ENCODE measurements at regions of chr5 and their contacts with region 1.

Region 1: GRCh38 chr5:134738133-134738962 is at the start of gene CAMLG:
- DNase-seq: peak; percentile 93 to 96 (median 96)
- ATAC-seq: peak; percentile 98
- H3K4me3 ChIP-seq: peak within 1 kb of the TSS; percentile 91
- H3K4me3 Mint-ChIP-seq: peak within 1 kb of the TSS; percentile 88 to 100 (median 96)
- H3K27ac ChIP-seq: peak within 1 kb of the TSS; percentile 93
- H3K27ac Mint-ChIP-seq: peak within 1 kb of the TSS; percentile 90 to 98 (median 93)
- H3K4me1 ChIP-seq: peaks cover 8 to 10% of the 10 kb centered on the region in 2 donors
- H3K4me1 Mint-ChIP-seq: peaks cover 9 to 34% (median 29%) of the 10 kb centered on the region in 7 donors
- H3K27me3 ChIP-seq: no peaks in the 10 kb centered on the region
- H3K27me3 Mint-ChIP-seq: no peaks in the 10 kb centered on the region
- total RNA-seq, gene CAMLG: 20.4 to 38.1 (median 31.8) TPM

Region 2: GRCh38 chr5:132736853-132737833 is 2001.2 kb before region 1 on chr5 and contains the start of gene KIF3A:
- CTCF ChIA-PET with region 1: no interaction called
- POLR2A ChIA-PET with region 1: no interaction called
- intact Hi-C with region 1: loop called in 1 of 2 experiments (anchors 5 kb)
- DNase-seq: peak; percentile 93 to 98 (median 97)
- ATAC-seq: peak; percentile 95
- H3K4me3 ChIP-seq: peak within 1 kb of the TSS; percentile 96
- H3K4me3 Mint-ChIP-seq: peak within 1 kb of the TSS; percentile 87 to 94 (median 92)
- H3K27ac ChIP-seq: peak within 1 kb of the TSS; percentile 78
- H3K27ac Mint-ChIP-seq: peak within 1 kb of the TSS; percentile 84 to 94 (median 92)
- H3K4me1 ChIP-seq: peaks cover 13 to 18% of the 10 kb centered on the region in 2 donors
- H3K4me1 Mint-ChIP-seq: peaks cover 14 to 52% (median 39%) of the 10 kb centered on the region in 7 donors
- H3K27me3 ChIP-seq: no peaks in the 10 kb centered on the region
- H3K27me3 Mint-ChIP-seq: peaks cover 0 to 18% (median 2%) of the 10 kb centered on the region in 5 donors
- total RNA-seq, gene KIF3A: 10.5 to 30.0 (median 18.7) TPM

Region 3: DNA sequence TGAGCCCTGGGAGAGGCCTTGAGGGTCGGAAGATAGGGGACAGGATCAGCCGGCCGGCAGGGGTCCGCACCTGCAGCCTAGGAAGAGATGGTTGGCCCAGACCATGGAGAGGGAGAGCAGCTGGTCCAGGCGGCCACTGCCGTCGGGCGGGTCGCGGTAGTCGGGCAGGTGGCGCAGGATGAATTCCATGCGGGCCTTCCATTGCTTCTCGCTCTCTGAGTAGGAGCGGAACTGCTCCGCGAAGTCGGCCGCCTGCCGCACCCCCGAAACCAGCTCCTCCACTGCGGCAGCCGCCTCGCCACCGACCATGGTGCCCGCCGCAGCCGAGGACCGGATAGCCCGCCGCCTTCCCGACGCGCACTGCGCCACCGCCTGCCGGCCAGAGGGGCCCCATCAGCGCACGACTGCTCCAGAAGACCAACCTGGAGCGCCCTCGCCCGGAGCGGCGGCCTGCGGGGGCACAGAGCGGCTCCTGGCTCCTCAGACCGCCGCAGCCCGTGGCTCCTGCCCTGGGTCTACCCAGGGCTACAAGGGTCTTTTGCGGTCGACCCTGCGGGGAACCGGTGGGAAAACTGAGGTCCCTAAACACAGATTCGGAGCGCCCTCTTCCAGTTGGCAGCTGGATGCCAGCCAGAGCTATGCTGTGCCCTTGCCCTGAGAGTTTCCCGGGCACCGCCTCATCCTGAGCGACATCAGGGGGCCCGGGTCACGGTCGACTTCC is 326.6 kb before region 1 on chr5 and contains the start of gene CDKN2AIPNL:
- CTCF ChIA-PET with region 1: no interaction called
- POLR2A ChIA-PET with region 1: no interaction called
- intact Hi-C with region 1: loop called in 1 of 2 experiments (anchors 1 kb)
- DNase-seq: peak; percentile 83 to 93 (median 89)
- ATAC-seq: peak; percentile 100
- H3K4me3 ChIP-seq: peak within 1 kb of the TSS; percentile 82
- H3K4me3 Mint-ChIP-seq: peak within 1 kb of the TSS; percentile 86 to 96 (median 92)
- H3K27ac ChIP-seq: peak within 1 kb of the TSS; percentile 82
- H3K27ac Mint-ChIP-seq: peak within 1 kb of the TSS; percentile 63 to 93 (median 90)
- H3K4me1 ChIP-seq: peaks cover 16 to 23% of the 10 kb centered on the region in 2 donors
- H3K4me1 Mint-ChIP-seq: peaks cover 20 to 54% (median 38%) of the 10 kb centered on the region in 7 donors
- H3K27me3 ChIP-seq: no peaks in the 10 kb centered on the region
- H3K27me3 Mint-ChIP-seq: no peaks in the 10 kb centered on the region
- total RNA-seq, gene CDKN2AIPNL: 11.5 to 20.8 (median 16.8) TPM

Region 4: DNA sequence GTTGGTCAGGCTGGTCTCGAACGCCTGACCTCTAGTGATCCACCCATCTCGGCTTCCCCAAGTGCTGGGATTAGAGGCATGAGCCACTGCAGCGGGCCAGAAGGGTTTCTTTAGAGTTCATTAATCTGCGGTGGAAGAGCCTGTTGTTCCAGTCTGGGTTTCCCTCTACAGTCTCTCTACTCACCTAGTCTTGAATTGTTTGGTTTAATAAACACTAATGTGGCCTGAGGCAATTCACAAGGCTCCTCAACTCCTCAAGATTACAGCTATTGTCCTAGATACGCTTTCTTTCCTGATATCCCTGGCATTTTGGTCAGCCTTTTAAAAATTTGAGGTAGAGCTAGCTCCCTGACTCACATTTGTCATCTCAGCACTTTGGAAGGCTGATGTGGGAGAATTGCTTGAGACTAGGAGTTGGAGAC is 101.2 kb before region 1 on chr5:
- CTCF ChIA-PET with region 1: no interaction called
- POLR2A ChIA-PET with region 1: no interaction called
- intact Hi-C with region 1: loop called (anchors 1 kb)
- DNase-seq: no peak
- ATAC-seq: no peak
- H3K4me3 ChIP-seq: no peak overlapping the region
- H3K4me3 Mint-ChIP-seq: no peak overlapping the region
- H3K27ac ChIP-seq: no peak overlapping the region
- H3K27ac Mint-ChIP-seq: no peak overlapping the region
- H3K4me1 ChIP-seq: no peaks in the 10 kb centered on the region
- H3K4me1 Mint-ChIP-seq: peaks cover 0 to 10% (median 4%) of the 10 kb centered on the region in 7 donors
- H3K27me3 ChIP-seq: no peaks in the 10 kb centered on the region
- H3K27me3 Mint-ChIP-seq: no peaks in the 10 kb centered on the region

Region 5: GRCh38 chr5:134692722-134693121 is 45.6 kb before region 1 on chr5:
- CTCF ChIA-PET with region 1: no interaction called
- POLR2A ChIA-PET with region 1: no interaction called
- intact Hi-C with region 1: no loop called
- DNase-seq: no peak
- ATAC-seq: no peak
- H3K4me3 ChIP-seq: no peak overlapping the region
- H3K4me3 Mint-ChIP-seq: no peak overlapping the region
- H3K27ac ChIP-seq: no peak overlapping the region
- H3K27ac Mint-ChIP-seq: peak overlapping the region in 3 of 9 donors; percentile 38 to 50 (median 40)
- H3K4me1 ChIP-seq: no peaks in the 10 kb centered on the region
- H3K4me1 Mint-ChIP-seq: no peaks in the 10 kb centered on the region
- H3K27me3 ChIP-seq: no peaks in the 10 kb centered on the region
- H3K27me3 Mint-ChIP-seq: no peaks in the 10 kb centered on the region

Region 6: DNA sequence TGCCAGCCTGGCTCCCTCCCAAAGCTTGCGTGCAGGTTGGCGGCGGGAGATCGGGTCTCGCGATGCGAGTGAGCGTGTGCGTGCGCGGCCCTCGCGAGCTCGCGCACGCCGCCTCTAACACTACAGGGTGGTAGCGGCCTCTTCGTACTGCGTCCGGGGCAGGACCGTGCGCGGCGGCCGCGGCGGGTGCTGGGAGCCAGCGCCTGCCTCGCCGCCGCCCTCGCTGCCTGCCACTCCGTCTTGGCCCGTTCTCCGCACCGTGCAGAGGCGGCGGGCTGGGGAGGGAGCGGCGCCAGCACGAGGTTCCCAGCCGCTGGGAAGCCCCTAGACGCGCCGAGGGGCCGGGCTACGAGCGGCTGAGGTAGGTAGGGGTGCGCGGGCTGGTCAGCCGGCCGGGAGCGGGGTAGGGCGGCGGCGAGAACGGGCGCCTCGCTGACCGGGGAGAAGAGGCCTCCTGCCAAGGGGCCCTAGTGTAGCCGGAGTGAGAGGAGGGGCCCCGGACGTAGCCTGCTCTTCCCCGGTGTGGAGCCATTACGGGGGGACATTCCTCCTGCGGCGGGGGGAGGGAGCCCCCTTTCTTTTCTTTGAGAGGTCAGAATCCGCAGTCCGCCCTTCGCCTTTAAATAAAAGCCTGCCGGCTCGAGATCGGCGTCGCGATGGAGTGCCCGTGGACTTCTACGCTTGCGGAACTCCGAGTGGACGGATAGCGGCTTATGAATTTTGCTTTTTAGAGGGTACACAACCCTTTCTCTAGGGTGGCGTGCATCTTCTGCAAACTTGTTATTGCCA is 107.7 kb after region 1 on chr5 and contains the start of gene C5orf24:
- CTCF ChIA-PET with region 1: interaction called, 3 read pairs
- POLR2A ChIA-PET with region 1: interaction called, 6 read pairs
- intact Hi-C with region 1: loop called (anchors 1 kb)
- DNase-seq: peak; percentile 83 to 93 (median 90)
- ATAC-seq: peak; percentile 98
- H3K4me3 ChIP-seq: peak within 1 kb of the TSS; percentile 60
- H3K4me3 Mint-ChIP-seq: peak within 1 kb of the TSS; percentile 84 to 99 (median 94)
- H3K27ac ChIP-seq: peak within 1 kb of the TSS; percentile 96
- H3K27ac Mint-ChIP-seq: peak within 1 kb of the TSS; percentile 94 to 99 (median 97)
- H3K4me1 ChIP-seq: peaks cover 16 to 19% of the 10 kb centered on the region in 2 donors
- H3K4me1 Mint-ChIP-seq: peaks cover 12 to 42% (median 31%) of the 10 kb centered on the region in 7 donors
- H3K27me3 ChIP-seq: no peaks in the 10 kb centered on the region
- H3K27me3 Mint-ChIP-seq: no peaks in the 10 kb centered on the region
- total RNA-seq, gene C5orf24: 20.3 to 42.7 (median 37.9) TPM

Region 7: GRCh38 chr5:135024956-135025729 is 286.8 kb after region 1 on chr5:
- CTCF ChIA-PET with region 1: no interaction called
- POLR2A ChIA-PET with region 1: no interaction called
- intact Hi-C with region 1: loop called in 1 of 2 experiments (anchors 2 kb)
- DNase-seq: no peak
- ATAC-seq: no peak
- H3K4me3 ChIP-seq: no peak overlapping the region
- H3K4me3 Mint-ChIP-seq: no peak overlapping the region
- H3K27ac ChIP-seq: no peak overlapping the region
- H3K27ac Mint-ChIP-seq: no peak overlapping the region
- H3K4me1 ChIP-seq: no peaks in the 10 kb centered on the region
- H3K4me1 Mint-ChIP-seq: peaks cover 8 to 19% (median 10%) of the 10 kb centered on the region in 7 donors
- H3K27me3 ChIP-seq: peaks cover 0 to 15% of the 10 kb centered on the region in 2 donors
- H3K27me3 Mint-ChIP-seq: peaks cover 35 to 60% (median 39%) of the 10 kb centered on the region in 5 donors

Region 8: DNA sequence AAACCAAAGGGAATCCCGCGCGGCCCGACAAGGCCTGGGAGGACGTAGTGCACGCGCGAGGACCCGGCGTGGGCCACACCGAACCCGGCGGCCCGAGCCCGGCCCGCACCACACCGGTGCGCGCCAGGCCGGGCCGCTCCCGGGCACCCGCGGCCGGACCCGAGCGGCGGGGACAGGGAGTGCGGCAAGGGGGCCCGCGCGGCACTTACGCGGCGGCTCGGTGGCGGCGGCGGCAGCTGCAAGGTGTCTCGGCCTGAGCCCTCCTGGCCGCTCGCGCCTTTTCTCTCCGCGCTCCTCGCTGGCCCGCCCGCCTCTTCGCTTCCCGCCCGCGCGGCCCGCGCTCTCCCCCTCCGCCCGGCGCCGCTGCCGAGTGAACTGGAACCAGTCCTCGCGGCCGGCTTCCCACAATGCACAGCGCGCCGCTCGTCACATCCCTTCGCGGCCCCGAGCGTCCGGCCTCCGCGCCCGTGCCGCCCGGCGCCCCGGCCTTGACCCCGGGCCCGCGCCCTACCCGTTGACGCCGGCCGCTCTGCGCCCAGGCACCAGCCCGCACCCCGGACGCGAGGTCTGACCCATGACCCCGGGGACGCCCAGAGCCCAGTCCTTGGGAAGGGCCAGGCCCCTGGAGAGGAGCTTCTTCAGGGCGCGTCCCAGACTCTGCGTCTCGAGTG is 660.6 kb after region 1 on chr5 and contains the start of gene MACROH2A1:
- CTCF ChIA-PET with region 1: no interaction called
- POLR2A ChIA-PET with region 1: no interaction called
- intact Hi-C with region 1: loop called in 1 of 2 experiments (anchors 2 kb)
- DNase-seq: peak; percentile 66 to 88 (median 76)
- ATAC-seq: peak; percentile 94
- H3K4me3 ChIP-seq: peak within 1 kb of the TSS; percentile 66
- H3K4me3 Mint-ChIP-seq: peak within 1 kb of the TSS; percentile 79 to 95 (median 92)
- H3K27ac ChIP-seq: peak within 1 kb of the TSS; percentile 75
- H3K27ac Mint-ChIP-seq: peak within 1 kb of the TSS; percentile 76 to 96 (median 85)
- H3K4me1 ChIP-seq: peaks cover 17 to 31% of the 10 kb centered on the region in 2 donors
- H3K4me1 Mint-ChIP-seq: peaks cover 33 to 58% (median 53%) of the 10 kb centered on the region in 7 donors
- H3K27me3 ChIP-seq: no peaks in the 10 kb centered on the region
- H3K27me3 Mint-ChIP-seq: peaks cover 0 to 14% (median 0%) of the 10 kb centered on the region in 5 donors
- total RNA-seq, gene MACROH2A1: 109 to 288 (median 140) TPM

Measured in naive thymus-derived CD4-positive, alpha-beta T cell (primary cell).